BJ (cell line): ENCODE measurements at regions of chrX and their contacts with region 1.

Region 1: DNA sequence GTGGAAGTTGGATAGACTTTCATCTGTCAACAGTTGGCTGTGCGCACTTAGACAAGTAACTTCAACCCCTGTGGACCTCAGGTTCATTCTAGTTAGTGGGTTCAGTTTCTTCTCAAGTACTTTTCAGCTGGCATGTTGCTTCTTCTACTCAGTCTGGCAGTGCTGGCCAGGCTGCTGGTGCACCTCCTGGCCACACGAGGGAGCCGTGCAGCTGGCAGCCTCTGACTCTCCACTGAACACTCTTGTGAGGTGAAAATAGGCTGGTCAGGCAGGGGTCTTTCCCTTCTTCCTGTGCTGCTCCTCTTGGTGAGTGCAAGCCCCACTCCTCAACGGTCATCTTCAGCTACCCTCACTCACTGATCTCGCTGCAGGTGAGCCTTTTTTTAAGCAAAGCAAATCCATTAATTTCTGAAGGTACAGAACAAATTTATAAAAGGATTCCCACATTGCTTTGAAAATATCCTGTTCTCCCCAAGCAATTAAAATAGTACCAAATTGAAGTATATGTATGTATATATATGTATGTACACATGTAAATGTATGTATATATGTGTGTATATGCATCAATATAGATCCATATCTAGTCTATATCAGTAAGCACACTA is 30.6 kb downstream of the LONRF3 start:
- DNase-seq: no peak
- H3K4me3 ChIP-seq: no peak overlapping the region
- H3K27me3 ChIP-seq: no peaks in the 10 kb centered on the region
- CTCF ChIP-seq: peak; percentile 88

Region 2: DNA sequence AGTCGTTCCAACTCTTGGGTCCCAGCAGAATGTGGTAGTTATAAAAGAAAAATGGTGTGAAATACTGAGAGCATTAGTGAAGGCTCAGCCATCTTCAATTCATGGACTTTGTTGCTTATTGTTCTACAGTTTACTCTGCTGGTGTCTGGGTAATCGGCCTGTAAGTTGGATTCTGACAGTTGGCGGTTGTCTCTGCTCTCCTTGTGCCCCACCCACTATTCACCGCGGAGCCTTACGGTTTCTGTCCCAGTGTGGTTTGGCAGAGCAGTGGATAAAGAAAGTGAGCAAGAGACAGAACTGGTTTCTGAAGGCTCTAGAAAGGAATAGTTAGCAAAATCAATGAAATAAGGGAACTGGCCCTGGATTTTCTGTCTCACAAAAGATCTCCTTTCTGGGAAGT is 21.5 kb before region 1 on chrX:
- CTCF ChIA-PET with region 1: interaction called, 10 read pairs
- POLR2A ChIA-PET with region 1: no interaction called
- DNase-seq: no peak
- H3K4me3 ChIP-seq: no peak overlapping the region
- H3K27me3 ChIP-seq: no peaks in the 10 kb centered on the region
- CTCF ChIP-seq: no peak

Region 3: GRCh38 chrX:119067023-119067739 is 62.2 kb after region 1 on chrX:
- CTCF ChIA-PET with region 1: interaction called, 27 read pairs
- POLR2A ChIA-PET with region 1: no interaction called
- DNase-seq: no peak
- H3K4me3 ChIP-seq: no peak overlapping the region
- H3K27me3 ChIP-seq: no peaks in the 10 kb centered on the region; the same call in 1 of the 2 replicates
- CTCF ChIP-seq: peak; percentile 67